ENCODE measurements at regions of chr12 and their contacts with region 1.

Region 1: DNA sequence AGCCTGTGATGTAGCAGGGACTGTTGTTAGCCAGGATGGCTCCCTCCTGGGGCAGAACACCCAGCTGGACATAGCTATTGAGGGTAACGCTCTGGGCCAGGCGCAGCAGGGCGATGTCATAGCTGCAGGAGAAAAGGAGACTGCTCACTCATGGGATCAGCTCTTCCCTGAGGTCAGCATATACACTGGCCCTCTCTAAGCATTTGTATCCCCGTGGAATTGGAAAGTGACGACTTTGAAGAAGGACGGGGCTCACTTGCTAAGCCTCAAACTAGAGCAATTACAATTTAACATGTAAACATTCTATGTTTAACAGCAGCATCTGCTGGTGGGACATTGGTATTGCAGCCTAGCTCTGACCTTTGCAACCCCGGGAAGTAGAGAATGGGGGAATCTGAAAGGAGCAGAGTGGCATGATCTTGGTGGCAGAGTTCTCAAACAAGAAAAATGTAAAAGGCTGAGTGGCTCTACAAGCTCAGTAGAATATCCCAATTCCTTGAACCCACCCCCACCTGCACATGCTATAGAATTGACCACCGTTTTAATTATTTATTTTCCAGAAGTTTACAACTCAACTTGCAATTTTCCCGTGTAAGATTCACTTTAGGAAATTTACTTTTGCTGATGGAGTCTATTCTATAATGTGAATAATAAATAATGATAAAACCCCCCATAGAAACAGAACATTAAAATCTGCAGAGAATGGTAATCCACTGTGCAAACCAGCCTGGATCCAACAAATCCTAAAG is 5.0 kb downstream of the CELA1 start:
- DNase-seq: peak; percentile 76
- H3K4me3 Mint-ChIP-seq: no peak overlapping the region
- H3K27ac Mint-ChIP-seq: no peak overlapping the region
- H3K4me1 Mint-ChIP-seq: peaks cover 4% of the 10 kb centered on the region
- H3K27me3 Mint-ChIP-seq: no peaks in the 10 kb centered on the region
- CTCF ChIP-seq: peak; percentile 97

Region 2: DNA sequence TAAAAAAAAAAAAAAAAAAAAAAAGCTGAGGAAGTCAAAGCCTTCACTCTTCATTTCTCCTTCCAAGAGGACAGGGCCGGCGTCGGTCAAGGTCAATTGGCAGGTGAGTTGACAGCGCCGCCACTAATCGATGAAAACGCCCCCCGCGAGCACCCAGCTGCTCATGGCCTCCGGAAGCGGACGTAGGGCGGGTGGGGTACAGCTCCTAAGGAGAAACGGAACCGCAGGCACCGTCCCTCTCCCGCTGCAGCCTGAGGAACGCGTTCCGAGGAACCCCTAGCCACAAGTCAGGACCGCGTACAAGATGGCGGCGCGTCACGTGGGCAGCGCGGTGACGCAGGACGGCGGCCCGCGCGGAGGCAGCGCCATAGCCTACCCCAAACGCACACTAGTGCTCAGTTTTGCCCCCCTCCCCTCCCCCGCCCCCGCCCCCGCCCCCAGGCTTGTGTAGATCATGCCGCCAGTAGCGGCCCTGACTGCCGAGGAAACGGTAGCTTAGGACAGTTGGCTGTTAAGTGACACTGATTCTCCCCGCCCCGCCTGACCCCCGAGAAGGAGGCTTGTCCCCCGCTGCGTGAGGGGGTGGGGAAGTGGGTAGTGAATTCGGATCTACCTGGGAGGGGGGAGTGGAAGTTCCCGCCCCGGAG is 577.7 kb before region 1 on chr12 and contains the start of gene ATF1:
- CTCF ChIA-PET with region 1: interaction called, 3 read pairs
- POLR2A ChIA-PET with region 1: interaction called, 5 read pairs
- intact Hi-C with region 1: loop called (anchors 1 kb)
- DNase-seq: peak; percentile 90
- H3K4me3 Mint-ChIP-seq: peak within 1 kb of the TSS; percentile 87
- H3K27ac Mint-ChIP-seq: peak within 1 kb of the TSS; percentile 99
- H3K4me1 Mint-ChIP-seq: peaks cover 20% of the 10 kb centered on the region
- H3K27me3 Mint-ChIP-seq: no peaks in the 10 kb centered on the region
- CTCF ChIP-seq: no peak
- total RNA-seq, gene ATF1: 73.1 and 87.2 TPM in 2 replicates

Region 3: GRCh38 chr12:50986966-50987737 is 354.3 kb before region 1 on chr12:
- CTCF ChIA-PET with region 1: interaction called, 15 read pairs
- POLR2A ChIA-PET with region 1: no interaction called
- intact Hi-C with region 1: no loop called
- DNase-seq: peak; percentile 67
- H3K4me3 Mint-ChIP-seq: no peak overlapping the region
- H3K27ac Mint-ChIP-seq: no peak overlapping the region
- H3K4me1 Mint-ChIP-seq: peaks cover 6% of the 10 kb centered on the region
- H3K27me3 Mint-ChIP-seq: no peaks in the 10 kb centered on the region
- CTCF ChIP-seq: peak; percentile 38

Region 4: GRCh38 chr12:51238510-51239334 is 102.7 kb before region 1 on chr12 and contains the start of gene DAZAP2:
- CTCF ChIA-PET with region 1: interaction called, 6 read pairs
- POLR2A ChIA-PET with region 1: interaction called, 17 read pairs
- intact Hi-C with region 1: no loop called
- DNase-seq: peak; percentile 92
- H3K4me3 Mint-ChIP-seq: peak within 1 kb of the TSS; percentile 96
- H3K27ac Mint-ChIP-seq: peak within 1 kb of the TSS; percentile 100
- H3K4me1 Mint-ChIP-seq: peaks cover 22% of the 10 kb centered on the region
- H3K27me3 Mint-ChIP-seq: no peaks in the 10 kb centered on the region
- CTCF ChIP-seq: no peak
- total RNA-seq, gene DAZAP2: 74.2 and 93.2 TPM in 2 replicates

Region 5: DNA sequence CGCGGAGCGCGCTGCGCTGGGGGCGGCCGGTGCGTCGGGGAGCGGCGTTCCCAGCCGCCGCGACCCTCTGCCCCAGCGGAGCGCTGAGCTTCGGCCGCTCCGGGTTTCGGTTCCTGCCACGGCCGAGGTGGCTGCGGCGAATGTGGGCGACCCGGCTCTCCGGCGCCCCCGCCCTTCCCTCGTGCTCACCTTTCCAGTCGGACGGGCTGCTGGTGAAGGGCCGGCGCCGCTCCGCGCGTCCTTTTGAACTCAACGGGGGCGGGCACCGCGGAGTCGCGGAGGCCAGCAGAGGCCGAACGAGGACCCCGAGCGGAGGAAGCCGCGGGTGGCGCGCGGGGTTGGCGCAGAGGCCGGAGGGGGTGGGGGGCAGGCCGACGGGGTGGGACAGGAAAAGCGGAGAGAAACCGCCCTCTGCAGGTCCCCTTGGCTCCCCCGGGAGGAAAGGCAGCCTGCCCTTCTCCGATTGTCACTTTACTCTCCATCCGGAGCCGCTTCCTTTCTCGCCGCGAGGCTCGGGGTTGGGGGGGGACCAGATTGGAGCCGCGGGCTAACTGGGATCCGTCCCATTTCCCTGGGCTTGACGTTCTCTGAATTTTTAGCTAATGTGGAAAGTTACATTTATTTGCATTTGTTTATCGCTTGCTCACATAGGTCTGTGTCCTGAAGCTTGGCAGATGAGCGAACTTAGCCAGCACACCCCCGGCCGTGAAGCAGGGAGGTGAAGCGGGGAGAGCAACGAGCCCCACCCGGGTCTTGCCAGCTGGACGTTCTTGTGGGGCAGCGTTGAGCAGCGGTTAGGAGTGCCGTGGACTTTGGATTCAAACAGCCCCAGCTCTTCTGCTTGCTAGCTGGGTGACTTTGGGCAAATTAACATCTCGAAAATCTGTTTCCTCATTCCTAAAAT is 71.1 kb before region 1 on chr12 and contains the start of gene SMAGP:
- CTCF ChIA-PET with region 1: interaction called, 110 read pairs
- POLR2A ChIA-PET with region 1: interaction called, 38 read pairs
- intact Hi-C with region 1: loop called (anchors 1 kb)
- DNase-seq: peak; percentile 44
- H3K4me3 Mint-ChIP-seq: peak within 1 kb of the TSS; percentile 87
- H3K27ac Mint-ChIP-seq: peak within 1 kb of the TSS; percentile 74
- H3K4me1 Mint-ChIP-seq: peaks cover 17% of the 10 kb centered on the region
- H3K27me3 Mint-ChIP-seq: no peaks in the 10 kb centered on the region
- CTCF ChIP-seq: no peak
- total RNA-seq, gene SMAGP: 17.4 and 19.0 TPM in 2 replicates

Region 6: DNA sequence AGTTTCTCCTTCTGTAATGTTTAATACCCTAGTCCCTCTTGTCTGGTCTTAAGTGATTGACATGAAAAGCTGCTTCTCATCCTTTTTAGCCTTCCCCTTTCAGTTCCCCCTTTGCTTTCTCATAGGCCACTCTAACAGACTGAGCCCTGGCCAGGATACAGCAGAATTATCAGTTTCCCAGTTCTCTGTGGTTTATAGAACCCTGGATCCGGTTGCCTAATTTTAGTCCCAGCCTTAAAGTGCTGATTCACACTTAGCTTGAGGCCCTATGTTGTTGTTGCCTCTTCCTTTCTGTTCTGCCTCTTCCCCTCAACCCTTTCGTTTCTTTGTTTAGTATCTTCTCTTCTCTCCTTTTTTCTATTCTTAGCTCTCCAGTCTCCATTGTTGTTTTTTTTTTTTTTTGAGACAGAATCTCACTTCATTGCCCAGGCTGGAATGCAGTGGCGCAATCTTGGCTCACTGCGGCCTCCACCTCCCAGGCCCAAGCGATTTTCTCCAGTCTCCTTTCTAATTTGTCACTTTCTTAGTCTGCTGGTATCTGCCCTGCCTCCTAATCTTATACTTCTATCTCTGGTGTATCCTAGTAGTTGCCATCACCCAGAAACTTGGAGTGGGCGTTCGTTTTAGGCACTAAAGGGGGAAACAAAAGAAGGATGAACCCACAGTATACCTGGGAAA is 14.5 kb before region 1 on chr12:
- CTCF ChIA-PET with region 1: interaction called, 24 read pairs
- POLR2A ChIA-PET with region 1: interaction called, 5 read pairs
- intact Hi-C with region 1: no loop called
- DNase-seq: peak; percentile 82
- H3K4me3 Mint-ChIP-seq: no peak overlapping the region
- H3K27ac Mint-ChIP-seq: peak overlapping the region; percentile 86
- H3K4me1 Mint-ChIP-seq: peaks cover 11% of the 10 kb centered on the region
- H3K27me3 Mint-ChIP-seq: no peaks in the 10 kb centered on the region
- CTCF ChIP-seq: no peak

Region 7: DNA sequence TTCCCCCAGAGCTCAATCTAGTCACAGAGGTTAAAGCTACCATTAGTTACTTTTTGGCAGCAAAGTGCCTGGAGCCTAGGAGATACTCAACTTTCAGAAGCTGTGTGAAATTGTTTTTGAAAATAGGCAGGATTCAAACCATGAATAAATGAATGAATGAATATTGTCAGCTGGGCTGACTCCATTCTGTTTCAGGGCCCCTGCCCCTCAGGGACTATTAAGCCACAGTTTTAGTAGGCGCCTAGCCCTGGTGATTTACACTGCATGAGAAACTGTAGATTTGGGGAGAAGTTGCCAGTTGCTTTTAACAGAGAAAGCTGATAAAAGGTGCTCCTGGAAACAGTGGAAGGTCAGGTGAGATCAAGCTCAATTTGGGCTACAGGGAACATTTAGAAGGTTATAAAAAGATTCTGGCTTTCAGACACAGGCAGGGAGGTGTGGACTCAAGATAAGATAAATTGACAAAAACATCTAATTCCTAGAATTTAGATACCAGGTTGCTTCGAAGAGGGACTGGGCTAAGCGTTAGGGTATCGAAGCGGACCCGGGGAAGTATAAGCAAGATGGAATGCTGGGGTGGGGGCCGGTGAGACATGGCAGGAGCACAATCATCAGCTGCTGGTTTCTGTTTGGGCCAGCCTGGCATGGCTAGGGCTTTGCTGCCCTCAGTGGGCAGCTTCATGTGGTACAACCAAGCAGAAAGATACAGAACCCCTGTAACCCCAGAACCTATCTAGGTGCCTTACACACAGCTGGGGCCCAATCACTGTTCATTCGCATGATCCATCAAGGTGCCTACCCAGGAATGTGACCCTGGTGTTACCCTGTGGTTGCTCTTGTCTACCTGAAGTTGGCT is 20.0 kb after region 1 on chr12:
- CTCF ChIA-PET with region 1: interaction called, 22 read pairs
- POLR2A ChIA-PET with region 1: no interaction called
- intact Hi-C with region 1: no loop called
- DNase-seq: no peak
- H3K4me3 Mint-ChIP-seq: no peak overlapping the region
- H3K27ac Mint-ChIP-seq: no peak overlapping the region
- H3K4me1 Mint-ChIP-seq: no peaks in the 10 kb centered on the region
- H3K27me3 Mint-ChIP-seq: no peaks in the 10 kb centered on the region
- CTCF ChIP-seq: no peak

Region 8: GRCh38 chr12:51538599-51538998 is 197.2 kb after region 1 on chr12:
- CTCF ChIA-PET with region 1: no interaction called
- POLR2A ChIA-PET with region 1: no interaction called
- intact Hi-C with region 1: no loop called
- DNase-seq: no peak
- H3K4me3 Mint-ChIP-seq: no peak overlapping the region
- H3K27ac Mint-ChIP-seq: no peak overlapping the region
- H3K4me1 Mint-ChIP-seq: no peaks in the 10 kb centered on the region
- H3K27me3 Mint-ChIP-seq: peaks cover 22% of the 10 kb centered on the region
- CTCF ChIP-seq: no peak